Activated CD4-positive, alpha-beta T cell treated with anti-CD3 and anti-CD28 coated beads, Interleukin-2, amount 10 ng/mL, durations not matched to agents 24 days and 14 days (primary cell): ENCODE measurements at regions of chr12 and their contacts with region 1.

Region 1: DNA sequence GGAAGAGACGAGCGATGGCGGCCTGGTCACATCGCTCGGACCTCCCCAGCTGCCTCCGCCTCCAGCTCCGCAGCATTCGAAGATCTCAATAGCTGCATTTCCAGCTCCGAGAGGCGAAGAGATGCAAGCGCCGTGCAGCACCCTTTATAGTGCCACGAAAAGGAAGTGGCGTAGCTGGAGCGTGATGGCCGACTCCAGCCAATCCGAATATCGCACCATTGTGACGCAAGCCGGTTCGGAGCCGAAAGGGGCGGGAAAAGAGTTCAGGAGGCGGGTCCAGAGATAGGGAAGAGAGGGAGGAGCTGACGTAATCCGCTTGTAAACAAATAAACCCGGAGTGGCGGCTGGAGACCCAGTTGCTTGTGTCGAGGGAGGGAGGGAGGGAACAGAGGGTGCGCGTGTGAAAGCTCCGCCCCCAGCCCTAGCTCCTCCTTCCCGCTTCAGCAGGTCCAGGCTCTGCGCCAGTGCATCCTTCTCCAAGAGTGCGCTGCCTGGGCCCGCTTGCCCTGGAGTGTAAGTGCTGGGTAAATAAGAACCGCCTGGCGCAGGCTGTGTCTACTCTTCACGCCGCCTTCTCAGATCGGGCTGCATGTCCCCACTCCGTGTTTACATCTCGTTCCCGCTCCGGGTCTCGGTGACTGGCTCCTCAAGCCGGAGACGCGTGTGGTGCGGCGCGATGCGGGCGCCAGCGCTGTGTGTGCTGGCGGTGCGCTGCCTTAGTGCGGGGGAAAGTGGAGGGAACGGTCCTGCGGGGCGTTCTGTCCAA is at the start of gene BTG1:
- DNase-seq: peak; percentile 100
- H3K4me3 Mint-ChIP-seq: peak within 1 kb of the TSS; percentile 99
- H3K27ac Mint-ChIP-seq: peak within 1 kb of the TSS; percentile 99
- H3K4me1 Mint-ChIP-seq: peaks cover 28% of the 10 kb centered on the region
- H3K27me3 Mint-ChIP-seq: no peaks in the 10 kb centered on the region
- total RNA-seq, gene BTG1: 84.2 and 90.8 TPM in 2 replicates

Region 2: DNA sequence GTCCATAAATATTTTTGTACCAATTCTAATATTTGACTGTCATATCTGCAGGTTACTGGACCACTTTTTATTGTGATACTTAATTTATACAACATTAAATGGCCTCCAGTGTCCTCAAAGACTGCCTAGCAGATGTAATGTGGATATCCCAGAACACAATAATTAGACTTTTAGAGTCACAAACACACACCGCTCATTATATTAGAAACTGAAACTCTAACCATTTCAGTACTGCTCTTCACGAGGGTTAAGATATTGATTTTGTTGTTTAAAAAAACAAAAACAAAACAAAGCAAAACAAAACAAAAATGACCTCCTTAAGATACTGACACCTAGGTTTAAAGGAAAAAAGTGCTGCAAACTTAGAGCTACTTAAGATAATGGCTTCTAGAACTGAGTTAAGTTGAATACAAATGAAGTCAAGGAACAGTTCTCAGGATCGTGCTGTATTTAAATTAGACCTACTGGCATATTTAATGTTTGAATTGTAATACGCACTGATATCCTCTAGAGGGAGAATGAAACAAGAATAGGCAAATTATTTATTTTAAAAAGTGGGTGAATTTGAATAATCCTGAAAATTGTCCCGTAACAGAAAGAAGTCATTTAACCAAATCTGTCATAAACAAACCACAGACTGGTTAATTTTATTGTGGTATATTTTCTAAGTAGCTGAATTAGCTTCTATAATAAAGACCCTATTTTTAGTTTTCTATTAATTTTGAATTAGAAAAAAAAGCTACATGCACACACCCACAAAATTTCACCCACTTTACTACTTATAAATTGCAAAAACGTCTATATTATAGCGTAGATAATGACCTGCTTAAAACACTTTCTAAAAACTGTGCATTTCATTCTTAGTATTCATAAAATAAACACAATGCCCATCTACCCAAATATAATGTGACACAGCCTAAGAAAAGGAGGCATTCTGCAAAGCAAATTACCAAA is 568.1 kb before region 1 on chr12:
- intact Hi-C with region 1: loop called (anchors 5 kb)
- DNase-seq: no peak
- H3K4me3 Mint-ChIP-seq: peak overlapping the region; percentile 74
- H3K27ac Mint-ChIP-seq: no peak overlapping the region
- H3K4me1 Mint-ChIP-seq: peaks cover 5% of the 10 kb centered on the region
- H3K27me3 Mint-ChIP-seq: peaks cover 3% of the 10 kb centered on the region

Region 3: GRCh38 chr12:92034858-92035401 is 111.0 kb before region 1 on chr12:
- intact Hi-C with region 1: loop called (anchors 1 kb)
- DNase-seq: peak; percentile 83
- H3K4me3 Mint-ChIP-seq: peak overlapping the region; percentile 88
- H3K27ac Mint-ChIP-seq: peak overlapping the region; percentile 84
- H3K4me1 Mint-ChIP-seq: peaks cover 64% of the 10 kb centered on the region
- H3K27me3 Mint-ChIP-seq: no peaks in the 10 kb centered on the region

Region 4: GRCh38 chr12:92208613-92209121 is 62.8 kb after region 1 on chr12:
- intact Hi-C with region 1: loop called (anchors 1 kb)
- DNase-seq: peak; percentile 82
- H3K4me3 Mint-ChIP-seq: peak overlapping the region; percentile 66
- H3K27ac Mint-ChIP-seq: peak overlapping the region; percentile 94
- H3K4me1 Mint-ChIP-seq: peaks cover 36% of the 10 kb centered on the region
- H3K27me3 Mint-ChIP-seq: no peaks in the 10 kb centered on the region

Region 5: DNA sequence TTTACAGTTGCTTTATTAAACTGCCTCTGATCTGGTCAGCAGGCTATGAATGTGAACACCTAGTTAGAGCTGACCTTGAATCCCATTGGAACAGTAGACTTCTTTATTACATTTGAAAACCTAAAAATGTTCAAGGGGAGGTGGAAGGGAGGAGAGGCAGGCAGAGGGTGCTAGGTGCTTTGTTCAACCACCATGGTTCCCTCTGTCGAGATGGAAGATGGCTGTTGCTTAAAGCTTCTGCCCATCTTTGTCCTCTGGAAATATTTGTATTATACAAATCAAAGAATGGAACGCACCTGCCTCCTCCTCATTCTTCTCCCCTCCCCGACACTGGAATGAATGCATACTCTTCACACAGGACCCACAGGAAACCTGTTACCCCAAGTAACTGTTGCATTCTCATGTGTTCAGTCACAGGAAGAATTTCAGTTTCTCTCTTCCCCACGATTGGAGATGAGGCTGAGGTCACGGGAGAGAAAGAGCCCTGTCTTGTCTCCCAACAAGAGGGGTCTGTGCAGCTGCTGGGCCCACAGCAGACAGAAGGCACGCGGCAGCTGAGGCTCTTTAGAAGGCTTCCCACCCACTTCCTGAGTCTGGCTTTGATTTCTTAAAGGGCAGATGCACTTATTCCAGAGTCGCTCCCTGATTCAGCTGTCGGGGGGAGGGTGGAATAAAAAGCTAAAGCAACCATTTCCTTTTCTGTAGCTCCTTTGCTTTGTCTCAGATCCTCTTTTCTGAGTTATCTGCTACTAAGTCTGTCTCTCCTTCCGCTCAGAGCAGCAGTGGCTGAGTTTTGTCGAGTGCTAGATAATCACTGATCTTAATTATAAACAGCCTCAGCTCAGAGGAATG is 217.6 kb after region 1 on chr12:
- intact Hi-C with region 1: loop called (anchors 5 kb)
- DNase-seq: peak; percentile 79
- H3K4me3 Mint-ChIP-seq: peak overlapping the region; percentile 75
- H3K27ac Mint-ChIP-seq: peak overlapping the region; percentile 64
- H3K4me1 Mint-ChIP-seq: peaks cover 41% of the 10 kb centered on the region
- H3K27me3 Mint-ChIP-seq: no peaks in the 10 kb centered on the region

Region 6: GRCh38 chr12:92505254-92506231 is 359.6 kb after region 1 on chr12:
- intact Hi-C with region 1: loop called (anchors 2 kb)
- DNase-seq: peak; percentile 83
- H3K4me3 Mint-ChIP-seq: peak overlapping the region; percentile 89
- H3K27ac Mint-ChIP-seq: peak overlapping the region; percentile 98
- H3K4me1 Mint-ChIP-seq: peaks cover 42% of the 10 kb centered on the region
- H3K27me3 Mint-ChIP-seq: no peaks in the 10 kb centered on the region

Region 7: DNA sequence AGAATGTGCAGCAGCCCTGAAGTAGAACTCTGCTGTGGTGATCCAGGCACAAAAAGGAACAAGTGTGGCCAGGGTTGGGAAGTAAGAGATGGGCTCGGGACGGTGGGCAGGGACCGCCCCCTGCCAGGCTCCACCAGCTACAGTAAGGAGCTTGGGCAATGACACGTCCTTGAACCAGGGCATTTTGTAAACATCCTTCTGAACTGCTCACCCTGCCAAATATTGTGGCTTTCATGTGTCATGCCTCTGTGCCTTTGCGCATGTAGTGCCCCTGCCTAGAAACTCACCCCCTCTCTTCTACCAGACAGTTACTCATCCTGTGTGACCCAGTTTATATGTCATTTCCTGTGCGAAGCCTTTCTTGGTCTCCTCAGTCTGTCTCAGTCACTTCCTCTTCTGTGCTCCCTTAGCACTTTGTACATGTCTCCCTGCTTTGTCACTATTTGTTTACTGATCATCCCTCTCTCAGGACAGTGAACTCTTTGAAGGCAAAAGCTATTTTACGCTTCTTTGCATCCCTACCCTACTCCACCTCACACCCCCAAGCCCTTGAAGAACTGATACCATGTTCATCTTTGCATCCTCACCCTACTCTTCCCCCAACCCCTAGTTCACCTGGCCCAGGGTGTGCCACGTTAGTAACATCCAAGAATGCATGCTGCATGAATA is 448.0 kb after region 1 on chr12:
- intact Hi-C with region 1: loop called (anchors 2 kb)
- DNase-seq: peak; percentile 92
- H3K4me3 Mint-ChIP-seq: peak overlapping the region; percentile 71
- H3K27ac Mint-ChIP-seq: peak overlapping the region; percentile 99
- H3K4me1 Mint-ChIP-seq: peaks cover 57% of the 10 kb centered on the region
- H3K27me3 Mint-ChIP-seq: no peaks in the 10 kb centered on the region